ENCODE measurements at regions of chr1 and their contacts with region 1.

Region 1: GRCh38 chr1:212035123-212035834 is at the starts of genes DTL and INTS7:
- DNase-seq: peak; percentile 99
- H3K4me3 ChIP-seq: peak within 1 kb of the TSS; percentile 1 to 51 (median 33)
- H3K27ac ChIP-seq: peak within 1 kb of the TSS; percentile 51 to 80 (median 80)
- H3K4me1 ChIP-seq: peaks cover 20% of the 10 kb centered on the region in 2 donors
- H3K27me3 ChIP-seq: no peaks in the 10 kb centered on the region
- CTCF ChIP-seq: peak; percentile 55 to 98 (median 91)
- POLR2A ChIP-seq: peak in 1 of 2 donors; percentile 71
- total RNA-seq, gene DTL: 1.2 to 3.9 (median 2.1) TPM
- total RNA-seq, gene INTS7: 14.8 to 22.6 (median 19.5) TPM

Region 2: DNA sequence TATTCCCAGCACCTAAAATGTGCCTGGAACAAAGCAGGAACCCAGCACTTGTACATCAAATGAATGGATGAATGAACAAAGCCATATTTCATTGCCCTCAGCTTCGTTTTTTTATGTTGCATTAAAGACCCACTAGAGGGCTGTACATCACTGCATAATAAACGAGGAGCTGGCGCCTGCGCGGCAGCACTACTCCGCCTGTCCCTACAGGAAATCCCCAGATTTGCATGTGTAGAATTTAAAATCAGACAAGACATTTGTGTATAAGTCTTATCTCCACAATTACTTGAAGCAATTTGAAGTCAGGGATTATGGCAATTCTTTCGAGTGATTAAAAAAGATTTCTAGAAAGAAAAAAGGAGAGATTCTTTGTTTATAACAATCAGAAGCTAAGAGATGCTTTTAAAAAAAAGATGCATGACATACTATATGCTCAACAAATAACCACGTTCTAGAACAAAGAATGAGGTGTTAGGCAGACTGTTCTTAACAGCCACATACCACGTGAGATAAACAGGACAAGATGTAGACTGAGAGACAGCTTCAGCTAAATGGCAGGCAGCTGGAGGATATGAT is 354.4 kb before region 1 on chr1:
- intact Hi-C with region 1: loop called (anchors 10 kb)
- DNase-seq: peak; percentile 60 to 61
- H3K4me3 ChIP-seq: no peak overlapping the region
- H3K27ac ChIP-seq: no peak overlapping the region
- H3K4me1 ChIP-seq: peaks cover 2% of the 10 kb centered on the region in 2 donors
- H3K27me3 ChIP-seq: no peaks in the 10 kb centered on the region
- CTCF ChIP-seq: peak; percentile 21 to 91 (median 70)
- POLR2A ChIP-seq: no peak

Region 3: DNA sequence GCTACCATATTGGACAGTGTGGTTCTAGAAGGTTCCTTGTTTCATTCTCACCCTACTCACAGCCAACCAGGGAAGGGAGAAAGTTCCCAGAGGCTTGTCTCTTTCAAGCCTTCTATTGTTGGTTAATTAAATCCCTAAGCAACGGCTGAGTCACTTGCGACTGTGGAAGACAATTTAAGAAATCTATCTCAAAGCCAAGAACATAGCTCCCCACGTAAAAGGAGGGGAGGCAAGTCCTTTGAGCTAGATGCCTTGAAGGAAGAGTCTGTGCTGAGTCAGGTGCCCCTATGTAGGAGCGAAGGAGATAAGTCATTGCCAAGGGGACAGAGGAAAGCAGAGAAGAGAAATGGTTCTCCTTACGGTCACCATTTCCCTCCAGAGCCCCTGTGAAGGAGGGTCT is 170.6 kb after region 1 on chr1:
- intact Hi-C with region 1: no loop called
- DNase-seq: no peak
- H3K4me3 ChIP-seq: no peak overlapping the region
- H3K27ac ChIP-seq: no peak overlapping the region
- H3K4me1 ChIP-seq: peaks cover 0 to 3% of the 10 kb centered on the region in 2 donors
- H3K27me3 ChIP-seq: no peaks in the 10 kb centered on the region
- CTCF ChIP-seq: no peak
- POLR2A ChIP-seq: no peak